CD8-positive, alpha-beta T cell (primary cell): ENCODE measurements at regions of chr1 and their contacts with region 1.

Region 1: DNA sequence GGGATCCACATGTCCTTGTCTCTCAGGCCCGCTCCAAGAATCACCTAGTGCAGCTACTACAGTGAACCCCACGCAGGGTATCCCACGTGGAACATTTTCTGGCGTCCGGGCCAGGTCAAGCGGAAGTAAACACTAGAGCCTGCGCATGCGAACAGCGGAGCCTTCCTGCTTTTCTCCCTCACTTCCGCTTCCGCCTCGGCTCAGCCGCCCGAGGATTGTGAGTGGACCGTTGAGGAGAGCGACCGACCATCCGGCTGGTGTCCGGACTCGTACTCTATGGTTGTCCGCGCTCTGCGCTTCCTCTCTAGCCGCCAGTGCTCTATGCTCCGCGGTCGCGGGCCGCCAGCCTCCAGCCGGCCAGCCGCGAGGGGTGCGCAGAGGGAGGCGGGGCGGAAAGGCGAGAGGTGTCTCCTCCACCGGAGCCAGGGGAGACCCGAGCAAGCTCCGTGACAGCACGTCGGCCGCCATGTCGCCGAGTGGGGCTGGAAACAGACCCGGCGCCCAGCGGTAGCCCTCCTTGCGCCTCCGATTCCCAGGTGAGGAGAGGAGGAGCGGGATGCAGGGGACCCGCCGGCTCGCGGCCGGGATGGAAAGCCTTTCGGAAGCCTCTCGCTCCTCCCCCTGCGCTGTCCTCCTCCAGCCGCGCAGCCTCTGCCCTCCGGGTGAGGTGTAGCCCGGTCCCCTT is at the starts of genes CNST and TFB2M:
- DNase-seq: peak; percentile 75 to 96 (median 91)
- ATAC-seq: peak; percentile 71
- H3K4me3 ChIP-seq: peak within 1 kb of the TSS; percentile 92 to 99
- H3K4me3 Mint-ChIP-seq: peak within 1 kb of the TSS; percentile 98
- H3K27ac ChIP-seq: peak within 1 kb of the TSS; percentile 83 to 91
- H3K27ac Mint-ChIP-seq: peak within 1 kb of the TSS; percentile 97
- H3K4me1 ChIP-seq: peaks cover 51% of the 10 kb centered on the region
- H3K4me1 Mint-ChIP-seq: peaks cover 54% of the 10 kb centered on the region
- H3K27me3 ChIP-seq: no peaks in the 10 kb centered on the region
- H3K27me3 Mint-ChIP-seq: no peaks in the 10 kb centered on the region
- CTCF ChIP-seq: no peak
- total RNA-seq, gene CNST: 64.1 to 64.4 TPM
- total RNA-seq, gene TFB2M: 15.8 to 16.4 TPM

Region 2: DNA sequence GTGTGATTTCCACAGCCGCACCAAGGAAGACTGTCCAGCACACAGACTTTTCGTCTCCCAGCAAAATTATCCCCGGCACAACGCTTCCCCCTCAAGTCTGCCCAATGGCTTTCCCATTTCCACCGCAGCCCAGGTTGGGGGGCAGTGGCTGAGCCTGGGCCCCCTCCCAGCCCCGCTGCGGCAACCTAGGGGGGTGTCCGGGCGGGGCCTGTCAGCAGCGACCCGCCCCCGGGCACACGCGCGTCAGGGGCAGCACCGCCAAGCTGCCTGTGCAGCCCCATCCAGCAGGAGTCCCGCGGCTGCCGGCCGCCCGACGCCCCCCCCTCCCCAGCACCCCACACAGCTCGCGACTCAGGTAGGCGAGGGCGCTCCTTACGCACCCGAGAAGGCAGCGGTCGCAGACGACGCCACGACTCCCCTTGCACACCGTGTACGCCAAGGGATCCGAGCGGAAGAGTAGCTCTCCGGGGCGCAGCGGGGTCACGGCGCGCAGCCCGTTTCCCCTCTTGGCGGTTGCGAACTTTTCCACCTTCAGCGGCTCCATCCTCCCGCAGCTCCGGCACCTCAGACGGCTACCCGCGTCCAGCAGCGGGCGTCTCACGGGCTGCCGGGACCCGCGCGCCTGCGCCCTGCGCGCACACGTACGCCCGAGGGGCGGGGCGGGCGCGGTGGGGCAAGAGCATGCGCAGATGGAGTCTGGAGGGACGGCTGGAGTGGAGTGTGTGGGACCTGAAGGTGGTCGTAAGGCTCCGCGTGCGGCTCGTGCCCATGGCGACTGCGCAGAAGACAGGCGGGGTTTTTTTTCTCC is 59.4 kb before region 1 on chr1 and contains the start of gene SMYD3:
- CTCF ChIA-PET with region 1: no interaction called
- POLR2A ChIA-PET with region 1: interaction called, 4 read pairs
- intact Hi-C with region 1: loop called (anchors 1 to 2 kb)
- DNase-seq: peak; percentile 56 to 92 (median 75)
- ATAC-seq: peak; percentile 88
- H3K4me3 ChIP-seq: peak within 1 kb of the TSS; percentile 77 to 92
- H3K4me3 Mint-ChIP-seq: peak within 1 kb of the TSS; percentile 88
- H3K27ac ChIP-seq: peak within 1 kb of the TSS; percentile 56 to 59
- H3K27ac Mint-ChIP-seq: peak within 1 kb of the TSS; percentile 85
- H3K4me1 ChIP-seq: peaks cover 13% of the 10 kb centered on the region
- H3K4me1 Mint-ChIP-seq: peaks cover 35% of the 10 kb centered on the region
- H3K27me3 ChIP-seq: no peaks in the 10 kb centered on the region
- H3K27me3 Mint-ChIP-seq: no peaks in the 10 kb centered on the region
- CTCF ChIP-seq: no peak
- total RNA-seq, gene SMYD3: 20.5 to 21.2 TPM

Region 3: DNA sequence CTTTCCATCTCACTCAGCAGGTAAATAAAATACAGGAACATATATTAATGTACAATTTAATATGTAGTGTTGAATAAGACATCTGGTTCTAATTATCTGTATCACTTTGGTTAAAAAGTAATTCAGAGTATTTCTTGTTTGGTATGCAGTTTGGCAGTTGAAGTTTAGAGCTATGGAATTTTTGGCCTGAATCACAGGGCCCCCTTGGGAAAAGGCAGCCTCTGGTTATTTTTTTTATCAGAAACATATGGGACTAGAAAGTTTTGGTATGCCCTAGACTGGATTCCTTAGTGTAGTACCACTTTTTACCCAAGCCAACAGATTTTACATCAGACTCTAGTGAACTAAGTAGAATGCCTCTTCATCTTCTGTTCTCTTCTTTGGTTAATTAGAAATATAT is 26.4 kb after region 1 on chr1:
- CTCF ChIA-PET with region 1: no interaction called
- POLR2A ChIA-PET with region 1: no interaction called
- intact Hi-C with region 1: loop called in 1 of 2 experiments (anchors 1 kb)
- DNase-seq: no peak
- ATAC-seq: no peak
- H3K4me3 ChIP-seq: no peak overlapping the region
- H3K4me3 Mint-ChIP-seq: no peak overlapping the region
- H3K27ac ChIP-seq: no peak overlapping the region
- H3K27ac Mint-ChIP-seq: no peak overlapping the region
- H3K4me1 ChIP-seq: peaks cover 15% of the 10 kb centered on the region
- H3K4me1 Mint-ChIP-seq: peaks cover 51% of the 10 kb centered on the region
- H3K27me3 ChIP-seq: no peaks in the 10 kb centered on the region
- H3K27me3 Mint-ChIP-seq: no peaks in the 10 kb centered on the region
- CTCF ChIP-seq: no peak

Region 4: DNA sequence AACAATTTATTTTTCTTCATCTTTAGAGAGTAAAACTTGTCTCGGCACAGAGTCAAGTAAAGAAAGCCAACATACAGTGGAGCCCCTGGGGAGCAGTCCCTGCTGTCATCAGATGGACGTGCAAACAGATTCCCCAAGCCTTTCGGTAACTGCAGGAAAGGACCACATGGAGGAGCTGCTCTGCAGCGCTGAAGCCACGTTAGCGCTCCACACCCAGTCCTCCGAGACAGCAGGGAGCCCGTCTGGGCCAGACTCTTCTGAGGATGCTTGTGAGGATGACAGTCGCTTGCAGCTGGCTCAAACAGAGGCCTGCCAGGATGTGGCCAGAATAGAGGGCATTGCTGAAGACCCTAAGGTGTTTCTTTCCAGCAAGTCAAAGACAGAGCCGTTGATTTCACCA is 80.8 kb after region 1 on chr1:
- CTCF ChIA-PET with region 1: interaction called, 3 read pairs
- POLR2A ChIA-PET with region 1: no interaction called
- intact Hi-C with region 1: loop called in 1 of 2 experiments (anchors 5 kb)
- DNase-seq: no peak
- ATAC-seq: no peak
- H3K4me3 ChIP-seq: no peak overlapping the region
- H3K4me3 Mint-ChIP-seq: no peak overlapping the region
- H3K27ac ChIP-seq: no peak overlapping the region
- H3K27ac Mint-ChIP-seq: no peak overlapping the region
- H3K4me1 ChIP-seq: no peaks in the 10 kb centered on the region
- H3K4me1 Mint-ChIP-seq: peaks cover 16% of the 10 kb centered on the region
- H3K27me3 ChIP-seq: no peaks in the 10 kb centered on the region
- H3K27me3 Mint-ChIP-seq: no peaks in the 10 kb centered on the region
- CTCF ChIP-seq: no peak

Region 5: GRCh38 chr1:246724016-246724730 is 157.9 kb after region 1 on chr1 and contains the start of gene SCCPDH:
- CTCF ChIA-PET with region 1: no interaction called
- POLR2A ChIA-PET with region 1: no interaction called
- intact Hi-C with region 1: loop called in 1 of 2 experiments (anchors 10 kb)
- DNase-seq: peak; percentile 39 to 83 (median 70)
- ATAC-seq: peak; percentile 95
- H3K4me3 ChIP-seq: peak within 1 kb of the TSS; percentile 69 to 79
- H3K4me3 Mint-ChIP-seq: peak within 1 kb of the TSS; percentile 93
- H3K27ac ChIP-seq: peak within 1 kb of the TSS in 1 of 2 experiments; percentile 58
- H3K27ac Mint-ChIP-seq: peak within 1 kb of the TSS; percentile 90
- H3K4me1 ChIP-seq: no peaks in the 10 kb centered on the region
- H3K4me1 Mint-ChIP-seq: peaks cover 16% of the 10 kb centered on the region
- H3K27me3 ChIP-seq: no peaks in the 10 kb centered on the region
- H3K27me3 Mint-ChIP-seq: no peaks in the 10 kb centered on the region
- CTCF ChIP-seq: no peak
- total RNA-seq, gene SCCPDH: 5.4 to 6.0 TPM

Region 6: DNA sequence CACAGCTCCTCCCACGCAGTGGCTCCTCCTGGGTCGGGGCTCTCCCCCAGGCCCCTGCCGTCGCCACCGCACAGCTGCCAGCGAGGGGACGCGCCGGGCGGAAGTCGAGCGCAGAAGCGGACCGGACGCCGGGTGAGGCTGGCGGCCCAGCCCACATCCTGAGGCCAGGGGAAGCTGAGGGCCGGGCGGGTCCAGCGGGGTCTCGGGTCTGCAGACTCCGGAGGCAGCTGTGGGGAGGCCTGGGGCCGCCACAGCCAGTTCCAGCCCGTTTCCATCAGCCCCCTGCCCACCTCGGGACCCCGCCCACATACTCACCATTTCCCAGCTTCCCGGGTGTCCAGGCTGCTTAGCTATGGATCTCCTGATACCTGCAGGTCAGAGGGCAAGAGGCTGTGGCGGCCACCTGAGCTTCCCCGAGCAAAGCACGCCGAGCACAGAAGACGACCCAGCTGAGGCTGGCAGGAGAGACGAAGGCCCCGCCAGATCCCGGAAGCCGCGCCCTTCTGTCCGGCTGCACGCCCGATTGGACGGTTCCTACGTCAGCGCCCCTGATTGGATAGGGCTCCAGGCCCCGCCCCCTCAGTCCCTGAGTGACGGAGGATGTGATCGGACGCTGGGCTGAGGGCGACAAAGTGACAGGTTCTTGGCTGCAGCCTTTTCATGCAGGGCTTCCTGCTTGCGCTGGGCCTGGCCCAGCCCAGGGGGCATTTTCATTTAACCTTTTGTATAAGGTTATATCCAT is 644.3 kb after region 1 on chr1:
- CTCF ChIA-PET with region 1: no interaction called
- POLR2A ChIA-PET with region 1: no interaction called
- intact Hi-C with region 1: loop called in 1 of 2 experiments (anchors 10 kb)
- DNase-seq: peak; percentile 89 to 97 (median 94)
- ATAC-seq: peak; percentile 99
- H3K4me3 ChIP-seq: peak overlapping the region; percentile 82 to 94
- H3K4me3 Mint-ChIP-seq: peak overlapping the region; percentile 94
- H3K27ac ChIP-seq: peak overlapping the region; percentile 84 to 94
- H3K27ac Mint-ChIP-seq: peak overlapping the region; percentile 94
- H3K4me1 ChIP-seq: peaks cover 30% of the 10 kb centered on the region
- H3K4me1 Mint-ChIP-seq: peaks cover 66% of the 10 kb centered on the region
- H3K27me3 ChIP-seq: no peaks in the 10 kb centered on the region
- H3K27me3 Mint-ChIP-seq: no peaks in the 10 kb centered on the region
- CTCF ChIP-seq: no peak

Region 7: DNA sequence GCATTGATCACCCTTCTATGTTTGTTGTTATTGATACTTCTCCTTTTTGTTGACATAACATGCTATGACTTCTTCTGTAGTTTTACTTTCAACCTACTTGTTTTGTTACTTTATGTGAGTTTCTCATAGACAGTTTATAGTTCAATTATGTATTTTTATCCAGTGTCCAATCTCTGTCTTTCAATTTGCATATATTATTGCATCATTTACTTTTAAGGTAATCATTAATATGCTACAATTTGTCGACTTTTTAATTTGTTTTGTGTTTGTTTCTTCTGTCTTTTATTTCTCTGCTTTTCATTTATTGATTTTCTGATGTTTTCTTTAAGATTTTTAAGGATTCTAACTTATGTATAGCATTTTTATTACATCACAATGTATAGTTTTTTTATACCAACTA is 1103.0 kb after region 1 on chr1:
- CTCF ChIA-PET with region 1: no interaction called
- POLR2A ChIA-PET with region 1: no interaction called
- intact Hi-C with region 1: no loop called
- DNase-seq: no peak
- ATAC-seq: no peak
- H3K4me3 ChIP-seq: no peak overlapping the region
- H3K4me3 Mint-ChIP-seq: no peak overlapping the region
- H3K27ac ChIP-seq: no peak overlapping the region
- H3K27ac Mint-ChIP-seq: no peak overlapping the region
- H3K4me1 ChIP-seq: no peaks in the 10 kb centered on the region
- H3K4me1 Mint-ChIP-seq: no peaks in the 10 kb centered on the region
- H3K27me3 ChIP-seq: no peaks in the 10 kb centered on the region
- H3K27me3 Mint-ChIP-seq: peaks cover 2% of the 10 kb centered on the region
- CTCF ChIP-seq: no peak